Posterior vena cava (tissue), 2 donors: ENCODE measurements at regions of chr5 and their contacts with region 1.

Region 1: GRCh38 chr5:62569470-62569869 is 9.1 kb upstream of the LRRC70 start:
- DNase-seq: no peak

Region 2: DNA sequence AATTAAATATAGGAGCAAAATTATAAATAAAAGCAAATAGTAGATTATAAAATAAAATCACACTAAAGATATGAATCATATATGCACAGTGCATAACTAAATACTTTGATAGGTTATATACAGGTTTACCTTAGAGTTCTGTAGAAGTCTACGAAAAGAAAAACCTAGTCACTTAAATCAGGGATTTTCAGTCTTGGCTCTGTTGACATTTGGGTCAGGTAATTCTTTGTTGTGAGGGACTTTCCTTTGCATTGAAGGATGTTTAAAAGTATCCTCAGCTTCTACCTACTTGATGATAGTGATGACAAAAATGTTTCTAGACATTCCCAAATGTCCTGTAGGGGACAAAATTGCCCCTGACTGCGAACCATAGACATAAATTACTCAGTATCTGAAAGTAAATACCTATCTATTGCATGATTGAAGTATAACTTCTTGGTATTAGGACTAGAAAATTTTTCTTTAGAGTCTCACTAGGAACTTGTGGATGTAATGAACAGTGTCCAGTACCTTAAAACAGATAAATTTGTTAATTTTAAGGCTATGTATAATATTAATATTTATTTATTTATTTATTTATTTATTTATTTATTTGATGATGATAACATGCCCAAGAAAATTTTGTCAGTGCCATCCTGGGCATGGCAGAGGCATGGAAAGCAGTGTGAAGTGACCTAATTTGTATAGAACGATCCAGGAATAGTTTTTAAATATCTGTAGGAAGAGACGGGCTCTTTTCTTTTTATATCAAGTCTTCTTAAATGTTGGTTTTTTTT is 34.8 kb before region 1 on chr5:
- intact Hi-C with region 1: loop called in 1 of 2 experiments (anchors 5 kb)
- DNase-seq: no peak

Region 3: GRCh38 chr5:62606878-62607277 is 37.4 kb after region 1 on chr5:
- intact Hi-C with region 1: no loop called
- DNase-seq: no peak